ENCODE measurements at regions of chr7 and their contacts with region 1.

Region 1: DNA sequence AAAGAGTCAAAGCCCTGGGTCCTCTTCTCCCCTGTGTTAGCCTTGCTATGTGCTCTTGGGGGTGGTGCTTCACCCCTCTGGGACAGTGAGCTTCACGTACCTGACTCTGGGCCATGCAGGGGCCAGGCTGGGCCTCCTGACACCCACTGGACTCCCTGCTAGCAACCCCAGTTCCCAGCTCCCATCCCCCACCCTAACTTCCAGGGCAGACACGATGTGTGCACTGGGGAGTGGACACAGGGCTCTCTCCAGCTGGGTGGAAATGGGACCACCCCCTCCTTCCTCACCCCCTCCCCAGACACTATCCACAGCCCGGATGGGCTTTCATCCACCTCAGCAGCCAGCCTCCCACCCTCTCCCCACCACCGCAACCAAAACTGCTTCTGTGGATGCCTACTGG is 113.0 kb upstream of the ZNF479 start:
- DNase-seq: no peak
- H3K4me3 ChIP-seq: no peak overlapping the region
- H3K27ac ChIP-seq: no peak overlapping the region
- H3K4me1 ChIP-seq: no peaks in the 10 kb centered on the region
- H3K27me3 ChIP-seq: no peaks in the 10 kb centered on the region
- CTCF ChIP-seq: no peak
- POLR2A ChIP-seq: no peak

Region 2: GRCh38 chr7:57179776-57180415 is 65.3 kb before region 1 on chr7:
- intact Hi-C with region 1: loop called in 1 of 2 experiments (anchors 10 kb)
- DNase-seq: peak in 1 of 7 donors; percentile 39
- H3K4me3 ChIP-seq: no peak overlapping the region
- H3K27ac ChIP-seq: no peak overlapping the region
- H3K4me1 ChIP-seq: no peaks in the 10 kb centered on the region
- H3K27me3 ChIP-seq: no peaks in the 10 kb centered on the region
- CTCF ChIP-seq: no peak
- POLR2A ChIP-seq: no peak